A673 (cell line): ENCODE measurements at regions of chr12 and their contacts with region 1.

Region 1: DNA sequence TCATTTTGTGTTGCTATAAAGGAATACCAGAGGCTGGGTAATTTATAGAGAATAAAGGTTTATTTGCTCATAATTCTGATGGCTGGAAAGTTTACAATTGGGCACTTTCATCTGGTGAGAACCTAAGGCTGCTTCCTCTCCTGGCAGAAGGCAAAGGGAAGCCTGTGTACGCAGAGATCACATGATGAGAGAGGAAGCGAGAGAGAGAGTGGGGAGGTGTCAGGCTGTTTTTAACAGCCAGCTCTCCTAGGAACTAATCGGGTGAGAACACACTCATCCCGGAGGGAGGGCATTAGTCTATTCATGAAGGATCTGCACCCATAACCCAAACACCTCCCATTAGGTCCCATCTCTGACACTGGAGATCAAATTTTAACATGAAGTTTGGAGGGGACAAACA is 45.5 kb upstream of the METAP2 start:
- DNase-seq: no peak
- H3K4me3 ChIP-seq: no peak overlapping the region
- H3K27ac ChIP-seq: no peak overlapping the region
- H3K4me1 ChIP-seq: no peaks in the 10 kb centered on the region
- H3K27me3 ChIP-seq: no peaks in the 10 kb centered on the region
- CTCF ChIP-seq: no peak

Region 2: DNA sequence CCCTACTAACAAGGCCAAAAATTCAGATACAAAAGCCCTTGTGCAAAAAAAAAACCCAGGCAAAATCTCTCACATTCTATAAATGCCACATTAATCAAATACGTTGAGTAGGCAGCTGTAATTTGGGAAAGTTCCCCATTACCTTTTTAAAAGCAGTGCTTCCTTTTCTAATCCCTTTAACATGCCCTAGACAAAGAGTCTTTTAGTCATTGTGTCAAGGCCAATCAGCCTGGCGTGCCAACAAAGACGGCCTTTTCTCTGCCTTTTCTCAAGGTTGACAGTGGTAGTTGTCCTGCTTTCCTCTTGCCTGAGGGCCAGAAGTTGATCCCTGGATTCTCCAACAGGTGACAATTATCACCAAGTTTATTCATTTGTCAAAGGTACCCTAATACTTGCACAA is 17.0 kb before region 1 on chr12:
- CTCF ChIA-PET with region 1: no interaction called
- POLR2A ChIA-PET with region 1: interaction called, 11 read pairs
- intact Hi-C with region 1: no loop called
- DNase-seq: peak; percentile 30
- H3K4me3 ChIP-seq: no peak overlapping the region
- H3K27ac ChIP-seq: no peak overlapping the region
- H3K4me1 ChIP-seq: peaks cover 18% of the 10 kb centered on the region
- H3K27me3 ChIP-seq: no peaks in the 10 kb centered on the region
- CTCF ChIP-seq: no peak

Region 3: DNA sequence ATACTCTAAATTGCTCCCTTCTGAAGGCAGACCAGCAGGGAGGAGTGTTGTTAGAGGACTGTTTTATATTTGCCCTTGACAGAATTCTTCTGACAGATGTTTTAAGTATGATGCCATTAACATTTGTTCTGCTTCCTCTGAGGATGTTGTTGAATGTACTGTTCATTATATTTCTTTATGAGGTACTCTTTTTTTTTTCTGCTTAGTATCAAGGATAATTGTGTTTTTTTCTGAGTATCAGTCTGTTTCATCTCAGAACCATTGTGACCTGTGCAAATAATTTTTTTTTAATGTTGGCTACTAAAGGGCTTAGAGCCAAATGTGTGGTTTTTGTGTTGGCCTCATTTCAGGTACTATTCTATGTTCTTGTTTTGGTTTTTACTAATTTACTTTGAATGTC is 56.1 kb after region 1 on chr12:
- CTCF ChIA-PET with region 1: no interaction called
- POLR2A ChIA-PET with region 1: no interaction called
- intact Hi-C with region 1: no loop called
- DNase-seq: no peak
- H3K4me3 ChIP-seq: no peak overlapping the region
- H3K27ac ChIP-seq: no peak overlapping the region
- H3K4me1 ChIP-seq: no peaks in the 10 kb centered on the region
- H3K27me3 ChIP-seq: no peaks in the 10 kb centered on the region
- CTCF ChIP-seq: no peak